Activated naive CD4-positive, alpha-beta T cell treated with anti-CD3 and anti-CD28 coated beads for 36 hours (primary cell): ENCODE measurements at regions of chrX and their contacts with region 1.

Region 1: DNA sequence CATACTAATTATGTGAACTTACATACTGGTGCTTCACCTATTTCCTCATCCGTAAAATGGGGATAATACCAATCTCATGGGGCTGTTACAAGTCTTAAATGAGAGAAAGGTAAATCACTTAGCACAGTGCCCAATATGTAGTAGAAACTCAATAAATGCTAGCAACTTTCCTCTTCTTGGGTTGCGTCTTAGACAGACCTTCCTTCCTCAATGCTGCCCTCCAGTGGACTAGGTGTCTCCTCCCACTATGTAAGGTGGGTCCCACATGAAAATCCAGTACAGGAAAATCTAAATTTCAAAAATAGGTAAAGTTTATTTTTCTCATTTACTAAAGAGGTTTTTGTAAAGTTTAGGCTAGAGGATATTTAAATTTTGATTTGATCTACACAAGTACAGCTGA is 20.6 kb downstream of the ZDHHC9 start:
- DNase-seq: peak; percentile 73
- H3K4me3 Mint-ChIP-seq: no peak overlapping the region
- H3K27ac Mint-ChIP-seq: no peak overlapping the region
- H3K4me1 Mint-ChIP-seq: peaks cover 13% of the 10 kb centered on the region
- H3K27me3 Mint-ChIP-seq: no peaks in the 10 kb centered on the region

Region 2: GRCh38 chrX:129637217-129638109 is 185.7 kb before region 1 on chrX:
- CTCF ChIA-PET with region 1: interaction called, 26 read pairs
- intact Hi-C with region 1: loop called (anchors 1 kb)
- DNase-seq: peak; percentile 86
- H3K4me3 Mint-ChIP-seq: no peak overlapping the region
- H3K27ac Mint-ChIP-seq: no peak overlapping the region
- H3K4me1 Mint-ChIP-seq: peaks cover 1% of the 10 kb centered on the region
- H3K27me3 Mint-ChIP-seq: no peaks in the 10 kb centered on the region

Region 3: GRCh38 chrX:129654419-129655165 is 168.5 kb before region 1 on chrX and contains the start of gene APLN:
- CTCF ChIA-PET with region 1: interaction called, 3 read pairs
- intact Hi-C with region 1: loop called (anchors 1 kb)
- DNase-seq: no peak
- H3K4me3 Mint-ChIP-seq: peak within 1 kb of the TSS; percentile 61
- H3K27ac Mint-ChIP-seq: no peak within 1 kb of the TSS
- H3K4me1 Mint-ChIP-seq: peaks cover 6% of the 10 kb centered on the region
- H3K27me3 Mint-ChIP-seq: peaks cover 11% of the 10 kb centered on the region
- total RNA-seq, gene APLN: 0.15 to 0.36 TPM

Region 4: DNA sequence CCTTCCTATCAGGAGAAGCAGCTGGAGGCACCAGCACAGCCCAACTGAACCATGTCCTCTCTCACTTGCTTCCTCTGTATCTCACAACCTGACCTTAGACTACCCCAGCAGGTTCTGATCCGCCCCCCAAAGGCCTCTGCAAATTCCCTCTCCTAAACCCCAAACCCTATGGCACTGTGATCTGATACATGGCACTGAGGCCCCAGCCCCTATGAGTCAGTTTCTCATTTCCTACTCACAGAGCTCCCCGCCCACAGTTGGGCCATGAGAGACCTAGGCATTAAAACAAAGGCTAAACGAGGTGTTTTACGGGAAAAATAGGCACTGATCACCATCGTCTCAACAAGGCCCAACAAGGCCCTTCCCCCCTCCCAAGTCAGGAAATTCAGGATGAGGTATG is 24.2 kb before region 1 on chrX:
- CTCF ChIA-PET with region 1: interaction called, 13 read pairs
- intact Hi-C with region 1: no loop called
- DNase-seq: peak; percentile 67
- H3K4me3 Mint-ChIP-seq: peak overlapping the region; percentile 15
- H3K27ac Mint-ChIP-seq: peak overlapping the region; percentile 75
- H3K4me1 Mint-ChIP-seq: peaks cover 28% of the 10 kb centered on the region
- H3K27me3 Mint-ChIP-seq: no peaks in the 10 kb centered on the region